ENCODE measurements at regions of chr3 and their contacts with region 1.

Region 1: GRCh38 chr3:46998121-46998851 is 18.8 kb downstream of the NBEAL2 start:
- DNase-seq: peak; percentile 18
- ATAC-seq: peak; percentile 48; the same call in 1 of the 2 replicates
- H3K4me3 ChIP-seq: no peak overlapping the region
- H3K27ac ChIP-seq: no peak overlapping the region
- H3K4me1 ChIP-seq: peaks cover 5% of the 10 kb centered on the region; the same call in 1 of the 2 replicates
- H3K27me3 ChIP-seq: no peaks in the 10 kb centered on the region
- CTCF ChIP-seq: peak; percentile 63
- POLR2A ChIP-seq: no peak
- RAD21 ChIP-seq: peak; percentile 70

Region 2: GRCh38 chr3:46923559-46924350 is 74.5 kb before region 1 on chr3:
- CTCF ChIA-PET with region 1: interaction called, 3 read pairs
- POLR2A ChIA-PET with region 1: no interaction called
- dilution Hi-C with region 1: no loop called
- in situ Hi-C with region 1: no loop called
- intact Hi-C with region 1: loop called (anchors 1 kb)
- DNase-seq: peak; percentile 12
- ATAC-seq: peak; percentile 72; the same call in 1 of the 2 replicates
- H3K4me3 ChIP-seq: no peak overlapping the region
- H3K27ac ChIP-seq: no peak overlapping the region
- H3K4me1 ChIP-seq: no peaks in the 10 kb centered on the region
- H3K27me3 ChIP-seq: no peaks in the 10 kb centered on the region
- CTCF ChIP-seq: peak; percentile 60
- POLR2A ChIP-seq: no peak
- RAD21 ChIP-seq: peak; percentile 75

Region 3: DNA sequence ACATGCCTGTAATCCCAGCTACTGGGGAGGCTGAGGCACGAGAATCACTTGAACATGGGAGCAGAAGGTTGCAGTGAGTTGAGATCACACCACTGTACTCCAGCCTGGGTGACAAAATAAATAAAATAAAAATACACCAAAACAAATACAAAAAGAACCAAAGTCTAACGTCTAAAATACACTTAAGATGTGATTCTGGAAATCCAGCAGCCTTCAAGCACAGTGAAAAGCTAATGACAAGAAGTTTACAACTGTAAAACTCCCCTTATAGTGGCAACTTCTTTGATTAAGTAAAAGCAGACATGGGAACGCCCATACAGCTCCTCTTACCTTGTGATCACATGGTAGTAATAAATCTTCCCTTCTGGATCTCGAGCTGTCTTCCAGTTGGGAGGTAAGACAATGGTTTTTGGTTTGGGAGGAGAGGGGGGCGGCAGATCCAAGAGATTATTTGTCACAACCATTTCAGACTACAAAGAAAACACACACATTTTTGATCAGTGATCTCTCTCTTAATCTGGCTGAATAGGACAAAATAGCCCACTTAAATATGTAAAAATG is 44.0 kb after region 1 on chr3:
- CTCF ChIA-PET with region 1: no interaction called
- POLR2A ChIA-PET with region 1: no interaction called
- dilution Hi-C with region 1: no loop called
- in situ Hi-C with region 1: no loop called
- intact Hi-C with region 1: no loop called
- DNase-seq: no peak
- ATAC-seq: no peak
- H3K4me3 ChIP-seq: no peak overlapping the region
- H3K27ac ChIP-seq: no peak overlapping the region
- H3K4me1 ChIP-seq: no peaks in the 10 kb centered on the region
- H3K27me3 ChIP-seq: no peaks in the 10 kb centered on the region
- CTCF ChIP-seq: no peak
- POLR2A ChIP-seq: no peak
- RAD21 ChIP-seq: no peak

Region 4: GRCh38 chr3:47057212-47057671 is 59.0 kb after region 1 on chr3:
- CTCF ChIA-PET with region 1: no interaction called
- POLR2A ChIA-PET with region 1: no interaction called
- dilution Hi-C with region 1: no loop called
- in situ Hi-C with region 1: no loop called
- intact Hi-C with region 1: no loop called
- DNase-seq: peak; percentile 31
- ATAC-seq: no peak
- H3K4me3 ChIP-seq: no peak overlapping the region
- H3K27ac ChIP-seq: no peak overlapping the region
- H3K4me1 ChIP-seq: no peaks in the 10 kb centered on the region
- H3K27me3 ChIP-seq: no peaks in the 10 kb centered on the region
- CTCF ChIP-seq: no peak
- POLR2A ChIP-seq: no peak
- RAD21 ChIP-seq: no peak